A549 (cell line): ENCODE measurements at regions of chr11 and their contacts with region 1.

Region 1: GRCh38 chr11:127074151-127074761 is 73.7 kb upstream of the KIRREL3 start:
- DNase-seq: peak; percentile 45 to 77
- ATAC-seq: peak; percentile 97 to 99
- H3K4me3 ChIP-seq: no peak overlapping the region
- H3K27ac ChIP-seq: no peak overlapping the region
- H3K4me1 ChIP-seq: peaks cover 8% of the 10 kb centered on the region
- CTCF ChIP-seq: peak; percentile 64
- EP300 ChIP-seq: no peak
- POLR2A ChIP-seq: no peak
- RAD21 ChIP-seq: peak; percentile 90 to 92

Region 2: DNA sequence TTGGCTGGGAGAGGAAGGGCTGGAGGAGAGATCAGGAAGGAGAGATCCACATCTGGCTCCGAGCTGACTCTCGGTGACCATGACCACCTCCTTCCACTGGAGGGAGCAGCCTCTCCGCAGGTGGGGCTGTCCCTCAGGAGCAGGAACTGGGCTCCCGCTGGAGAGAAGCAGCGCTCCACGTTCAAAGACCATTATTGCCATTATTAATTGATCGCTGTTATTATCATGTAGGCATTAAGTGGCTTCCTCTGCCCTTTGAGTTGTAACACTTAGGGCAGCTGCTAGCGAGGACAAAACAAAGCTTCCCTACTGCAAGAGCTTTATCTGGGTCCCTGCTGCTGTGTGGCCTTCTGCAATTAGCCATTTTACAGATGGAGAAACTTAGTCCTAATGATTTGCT is 466.9 kb before region 1 on chr11:
- CTCF ChIA-PET with region 1: interaction called, 37 read pairs
- POLR2A ChIA-PET with region 1: no interaction called
- DNase-seq: peak; percentile 44 to 59
- ATAC-seq: peak; percentile 98
- H3K4me3 ChIP-seq: no peak overlapping the region
- H3K27ac ChIP-seq: peak overlapping the region in 1 of 2 experiments; percentile 52; a peak in 2 of 6 replicates
- H3K4me1 ChIP-seq: 0 out of 3 replicates have a peak, but pooled peaks cover 4% of the 10 kb centered on the region
- CTCF ChIP-seq: peak; percentile 72
- EP300 ChIP-seq: no peak
- POLR2A ChIP-seq: no peak
- RAD21 ChIP-seq: peak; percentile 84 to 88

Region 3: DNA sequence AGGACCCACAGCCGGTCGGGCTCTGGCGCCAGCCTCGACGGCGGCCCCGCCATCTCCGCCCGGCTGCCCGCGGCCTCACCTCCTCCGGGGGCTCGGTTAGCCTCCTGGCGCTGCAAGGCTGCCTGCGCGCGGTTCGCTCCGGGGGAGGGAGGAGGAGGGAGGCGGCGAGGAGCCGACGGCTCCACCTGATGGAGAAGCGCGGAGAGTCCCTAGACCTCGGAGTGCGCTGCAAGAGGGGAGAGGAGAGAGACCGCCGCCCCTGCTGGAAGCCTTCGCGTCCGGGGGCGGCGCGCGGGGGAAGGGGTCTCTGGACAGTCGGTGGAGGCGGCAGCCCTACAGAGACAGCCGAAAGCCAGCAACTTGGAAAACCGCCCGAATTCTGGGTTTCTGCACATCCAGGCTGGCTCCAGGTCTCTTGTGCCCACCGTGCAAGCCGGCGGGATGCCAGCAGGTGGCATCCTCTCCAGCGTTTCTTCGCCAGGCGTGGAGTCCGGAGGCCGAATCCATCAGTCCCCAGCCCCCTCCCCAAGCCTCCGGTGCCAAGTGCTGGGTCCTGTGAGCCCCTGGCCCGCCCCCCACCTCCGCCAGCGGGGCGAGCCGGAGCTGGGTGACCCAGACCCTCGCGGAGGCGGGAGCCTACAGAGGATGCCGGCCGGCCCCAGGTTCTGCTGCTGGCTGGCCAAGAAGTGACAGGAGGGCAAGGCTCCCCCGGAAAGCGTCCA is 70.8 kb before region 1 on chr11:
- CTCF ChIA-PET with region 1: interaction called, 62 read pairs
- POLR2A ChIA-PET with region 1: no interaction called
- DNase-seq: peak; percentile 65 to 69
- ATAC-seq: peak; percentile 89 to 92
- H3K4me3 ChIP-seq: peak overlapping the region; percentile 41
- H3K27ac ChIP-seq: peak overlapping the region; percentile 67 to 92
- H3K4me1 ChIP-seq: peaks cover 22% of the 10 kb centered on the region
- CTCF ChIP-seq: peak; percentile 73
- EP300 ChIP-seq: no peak
- POLR2A ChIP-seq: no peak
- RAD21 ChIP-seq: peak; percentile 44 to 67

Region 4: GRCh38 chr11:127017482-127017881 is 56.8 kb before region 1 on chr11:
- CTCF ChIA-PET with region 1: interaction called, 14 read pairs
- POLR2A ChIA-PET with region 1: no interaction called
- DNase-seq: peak; percentile 64 to 81
- ATAC-seq: peak; percentile 98 to 99
- H3K4me3 ChIP-seq: no peak overlapping the region
- H3K27ac ChIP-seq: peak overlapping the region; percentile 46 to 73
- H3K4me1 ChIP-seq: peaks cover 35% of the 10 kb centered on the region
- CTCF ChIP-seq: peak; percentile 41
- EP300 ChIP-seq: no peak
- POLR2A ChIP-seq: no peak
- RAD21 ChIP-seq: peak; percentile 32 to 51; a peak in 4 of 5 replicates